Sciatic nerve (tissue), 2 donors: ENCODE measurements at regions of chr17 and their contacts with region 1.

Region 1: GRCh38 chr17:50269477-50270434 is 4.5 kb upstream of the TMEM92 start:
- DNase-seq: peak; percentile 89
- ATAC-seq: peak; percentile 72

Region 2: DNA sequence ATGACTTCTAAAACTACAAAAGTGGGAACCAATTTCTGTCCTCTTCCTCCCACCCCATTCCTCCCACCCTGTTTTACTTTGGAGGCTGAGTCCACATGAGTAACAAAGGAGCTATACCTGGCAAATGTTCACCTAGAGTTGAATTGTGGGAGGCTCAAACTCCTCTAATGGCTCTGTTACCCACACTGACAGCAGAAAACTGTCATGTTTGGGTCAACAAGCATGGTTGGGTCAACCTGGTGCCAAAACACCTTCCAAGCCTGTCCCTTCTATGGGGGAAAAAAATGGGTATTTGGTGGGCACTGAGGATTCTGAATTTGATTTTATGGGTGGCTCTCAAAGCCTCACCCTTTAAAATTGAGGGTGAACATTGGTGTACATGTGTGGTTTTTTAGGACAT is 1529.2 kb before region 1 on chr17:
- intact Hi-C with region 1: loop called (anchors 5 kb)
- DNase-seq: no peak
- ATAC-seq: no peak

Region 3: DNA sequence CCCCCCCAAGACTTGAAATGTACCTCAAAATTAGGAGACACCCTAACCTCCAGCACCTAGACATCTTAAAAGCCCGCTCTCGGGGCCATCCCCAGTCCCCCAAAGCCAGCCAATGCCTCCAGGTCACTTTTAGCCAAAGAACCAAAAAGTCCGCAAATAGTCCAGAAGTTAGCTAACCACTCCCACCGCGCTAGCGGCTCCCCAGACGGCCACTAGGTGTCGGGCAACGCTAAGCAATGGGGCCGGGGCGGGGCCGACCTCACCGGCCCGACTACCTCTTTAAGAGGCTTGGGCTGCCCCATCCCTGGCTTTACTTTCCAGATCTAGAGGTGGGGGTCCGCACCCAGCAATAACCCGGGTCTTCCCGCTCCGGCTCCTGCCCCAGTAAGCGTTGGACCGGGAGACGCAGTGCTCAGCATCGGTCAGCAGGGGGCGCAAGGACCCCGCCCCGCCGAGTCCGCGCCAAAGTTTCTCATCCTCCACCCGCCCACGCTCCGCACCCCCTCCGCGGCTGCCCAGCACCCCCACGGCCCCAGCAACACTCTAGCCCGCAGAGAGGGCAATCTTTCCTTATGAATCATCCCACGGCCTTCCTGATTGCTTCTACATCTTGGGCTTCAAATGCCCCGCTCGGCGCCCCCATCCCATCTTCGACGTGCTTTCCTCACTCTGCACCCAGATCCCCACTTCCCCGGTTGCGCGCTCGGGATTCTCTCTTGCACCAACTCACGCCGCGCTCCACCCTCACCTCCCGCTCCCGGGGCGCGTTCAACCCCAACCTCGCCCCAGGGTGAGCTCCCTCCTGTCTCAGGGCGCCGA is 69.1 kb before region 1 on chr17:
- intact Hi-C with region 1: loop called (anchors 1 kb)
- DNase-seq: peak; percentile 96
- ATAC-seq: peak; percentile 87